Activated CD8-positive, alpha-beta T cell treated with anti-CD3 and anti-CD28 coated beads for 36 hours (primary cell): ENCODE measurements at regions of chr11 and their contacts with region 1.

Region 1: GRCh38 chr11:65988791-65989592 is 13.0 kb downstream of the EIF1AD start:
- DNase-seq: peak; percentile 98
- ATAC-seq: peak; percentile 99
- H3K4me3 Mint-ChIP-seq: no peak overlapping the region
- H3K27ac Mint-ChIP-seq: peak overlapping the region; percentile 53
- H3K4me1 Mint-ChIP-seq: peaks cover 5% of the 10 kb centered on the region
- H3K27me3 Mint-ChIP-seq: no peaks in the 10 kb centered on the region
- CTCF ChIP-seq: peak; percentile 99

Region 2: DNA sequence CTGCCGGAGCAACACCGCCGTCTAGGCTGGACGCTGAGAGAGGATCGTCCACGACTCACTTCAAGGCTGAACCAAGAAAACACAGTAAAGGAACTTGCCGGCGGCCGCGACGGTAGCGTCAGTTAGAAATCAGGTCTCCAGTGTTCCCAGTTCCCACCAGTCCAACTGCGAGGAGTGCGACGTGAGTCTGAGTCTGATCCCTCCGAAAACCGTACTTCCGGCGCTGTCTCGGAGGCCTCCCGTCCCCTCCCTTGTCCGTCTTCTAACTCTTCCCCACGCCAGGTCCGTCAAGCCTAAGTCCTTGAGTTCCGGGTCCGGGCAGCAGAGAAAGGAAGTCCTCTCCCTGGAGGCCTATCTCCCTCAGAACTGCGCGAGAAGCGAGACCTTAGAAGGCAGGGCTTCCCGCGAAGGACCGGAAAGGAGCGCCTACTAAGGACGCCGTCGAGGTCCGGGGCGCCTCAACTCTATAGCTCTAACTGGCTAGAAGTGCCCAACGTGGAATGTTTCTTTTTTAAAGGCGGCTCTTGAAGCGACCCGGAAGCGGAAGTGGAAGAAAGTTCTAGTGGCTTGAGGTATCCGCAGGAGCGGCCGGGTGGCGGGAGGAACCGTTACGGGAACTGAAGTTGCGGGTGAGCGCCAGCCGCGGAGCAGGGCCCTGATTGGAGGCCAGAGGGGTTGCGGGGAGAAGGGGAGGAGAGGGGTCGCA is 13.1 kb after region 1 on chr11 and contains the starts of genes BANF1 and EIF1AD:
- CTCF ChIA-PET with region 1: interaction called, 15 read pairs
- POLR2A ChIA-PET with region 1: interaction called, 3 read pairs
- intact Hi-C with region 1: no loop called
- DNase-seq: peak; percentile 96
- ATAC-seq: peak; percentile 93
- H3K4me3 Mint-ChIP-seq: peak within 1 kb of the TSS; percentile 98
- H3K27ac Mint-ChIP-seq: peak within 1 kb of the TSS; percentile 98
- H3K4me1 Mint-ChIP-seq: peaks cover 34% of the 10 kb centered on the region
- H3K27me3 Mint-ChIP-seq: no peaks in the 10 kb centered on the region
- CTCF ChIP-seq: no peak
- total RNA-seq, gene BANF1: 267 to 311 TPM
- total RNA-seq, gene EIF1AD: 44.4 to 45.6 TPM